Activated CD4-positive, alpha-beta T cell treated with anti-CD3 and anti-CD28 coated beads for 36 hours (primary cell): ENCODE measurements at regions of chr18 and their contacts with region 1.

Region 1: DNA sequence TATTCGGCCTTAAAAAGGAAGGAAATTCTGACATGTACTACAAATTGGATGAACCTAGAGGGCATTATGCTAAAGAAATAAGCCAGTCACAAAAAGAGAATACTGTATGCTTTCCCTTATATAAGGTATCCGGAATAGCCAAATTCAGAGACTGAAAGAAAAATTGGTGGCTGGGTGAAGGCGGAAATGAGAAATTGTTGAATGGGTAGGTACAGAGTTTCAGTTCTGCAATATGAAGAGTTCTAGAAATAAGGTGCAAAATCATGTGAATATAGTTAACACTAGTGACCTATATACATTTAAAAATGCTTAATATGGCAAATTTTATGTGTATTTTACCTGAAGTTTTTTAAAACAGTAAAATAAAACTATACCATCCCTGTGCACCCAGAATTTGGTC is 43.1 kb downstream of the RMP24 start:
- DNase-seq: no peak
- ATAC-seq: no peak
- H3K4me3 Mint-ChIP-seq: no peak overlapping the region
- H3K27ac Mint-ChIP-seq: no peak overlapping the region
- H3K4me1 Mint-ChIP-seq: no peaks in the 10 kb centered on the region
- H3K27me3 Mint-ChIP-seq: no peaks in the 10 kb centered on the region

Region 2: GRCh38 chr18:35459005-35459441 is 556.6 kb before region 1 on chr18:
- CTCF ChIA-PET with region 1: no interaction called
- POLR2A ChIA-PET with region 1: no interaction called
- intact Hi-C with region 1: no loop called
- DNase-seq: no peak
- ATAC-seq: peak; percentile 30
- H3K4me3 Mint-ChIP-seq: no peak overlapping the region
- H3K27ac Mint-ChIP-seq: no peak overlapping the region
- H3K4me1 Mint-ChIP-seq: no peaks in the 10 kb centered on the region
- H3K27me3 Mint-ChIP-seq: no peaks in the 10 kb centered on the region

Region 3: GRCh38 chr18:35756506-35757117 is 259.0 kb before region 1 on chr18:
- CTCF ChIA-PET with region 1: interaction called, 4 read pairs
- POLR2A ChIA-PET with region 1: no interaction called
- intact Hi-C with region 1: loop called in 1 of 2 experiments (anchors 2 kb)
- DNase-seq: peak; percentile 72
- ATAC-seq: peak; percentile 68
- H3K4me3 Mint-ChIP-seq: no peak overlapping the region
- H3K27ac Mint-ChIP-seq: no peak overlapping the region
- H3K4me1 Mint-ChIP-seq: no peaks in the 10 kb centered on the region
- H3K27me3 Mint-ChIP-seq: peaks cover 8% of the 10 kb centered on the region

Region 4: DNA sequence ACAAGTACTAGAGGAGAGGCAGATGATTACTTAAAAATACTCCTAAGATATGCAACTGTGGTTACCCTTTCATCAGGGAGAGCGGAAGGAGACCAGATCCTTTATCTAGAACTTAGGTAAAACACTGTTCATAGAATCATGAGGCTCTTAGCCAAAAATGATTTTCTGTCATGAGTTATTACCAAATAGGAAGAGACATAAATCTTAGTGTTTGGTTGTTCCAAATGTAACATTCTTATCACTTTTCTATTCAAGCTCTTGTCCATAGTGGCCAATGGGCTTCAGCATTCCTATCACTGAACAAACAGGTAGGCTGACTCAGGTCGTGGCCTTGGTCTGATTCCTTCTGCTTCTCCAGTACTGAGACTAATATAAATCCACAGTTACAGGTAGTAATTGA is 13.2 kb after region 1 on chr18:
- CTCF ChIA-PET with region 1: interaction called, 18 read pairs
- POLR2A ChIA-PET with region 1: no interaction called
- intact Hi-C with region 1: no loop called
- DNase-seq: no peak
- ATAC-seq: no peak
- H3K4me3 Mint-ChIP-seq: no peak overlapping the region
- H3K27ac Mint-ChIP-seq: no peak overlapping the region
- H3K4me1 Mint-ChIP-seq: peaks cover 29% of the 10 kb centered on the region
- H3K27me3 Mint-ChIP-seq: no peaks in the 10 kb centered on the region

Region 5: GRCh38 chr18:36572135-36572856 is 556.7 kb after region 1 on chr18:
- CTCF ChIA-PET with region 1: no interaction called
- POLR2A ChIA-PET with region 1: no interaction called
- intact Hi-C with region 1: loop called in 1 of 2 experiments (anchors 5 kb)
- DNase-seq: peak; percentile 60
- ATAC-seq: peak; percentile 51
- H3K4me3 Mint-ChIP-seq: no peak overlapping the region
- H3K27ac Mint-ChIP-seq: no peak overlapping the region
- H3K4me1 Mint-ChIP-seq: peaks cover 2% of the 10 kb centered on the region
- H3K27me3 Mint-ChIP-seq: peaks cover 2% of the 10 kb centered on the region